A673 (cell line): ENCODE measurements at regions of chrX and their contacts with region 1.

Region 1: GRCh38 chrX:38095971-38096529 is 89.7 kb downstream of the SYTL5 start:
- DNase-seq: no peak
- H3K4me3 ChIP-seq: no peak overlapping the region
- H3K27ac ChIP-seq: no peak overlapping the region
- H3K4me1 ChIP-seq: no peaks in the 10 kb centered on the region
- H3K27me3 ChIP-seq: no peaks in the 10 kb centered on the region
- CTCF ChIP-seq: no peak

Region 2: GRCh38 chrX:38561126-38561868 is 465.2 kb after region 1 on chrX and contains the start of gene TSPAN7:
- CTCF ChIA-PET with region 1: no interaction called
- POLR2A ChIA-PET with region 1: no interaction called
- intact Hi-C with region 1: loop called (anchors 10 kb)
- DNase-seq: peak; percentile 80
- H3K4me3 ChIP-seq: peak within 1 kb of the TSS; percentile 45
- H3K27ac ChIP-seq: no peak within 1 kb of the TSS
- H3K4me1 ChIP-seq: no peaks in the 10 kb centered on the region
- H3K27me3 ChIP-seq: no peaks in the 10 kb centered on the region
- CTCF ChIP-seq: no peak
- total RNA-seq, gene TSPAN7: 0.26 and 0.31 TPM in 2 replicates